Mammary epithelial cell (primary cell): ENCODE measurements at regions of chr12 and their contacts with region 1.

Region 1: GRCh38 chr12:33605751-33606150 is 166.1 kb upstream of the SYT10 start:
- DNase-seq: peak; percentile 30
- H3K4me3 ChIP-seq: no peak overlapping the region
- H3K27ac ChIP-seq: no peak overlapping the region
- H3K4me1 ChIP-seq: no peaks in the 10 kb centered on the region
- H3K27me3 ChIP-seq: no peaks in the 10 kb centered on the region
- CTCF ChIP-seq: peak; percentile 51 to 71

Region 2: GRCh38 chr12:33427072-33427471 is 178.7 kb before region 1 on chr12:
- CTCF ChIA-PET with region 1: no interaction called
- dilution Hi-C with region 1: no loop called
- in situ Hi-C with region 1: no loop called
- intact Hi-C with region 1: loop called (anchors 1 kb)
- DNase-seq: peak; percentile 45
- H3K4me3 ChIP-seq: no peak overlapping the region
- H3K27ac ChIP-seq: no peak overlapping the region
- H3K4me1 ChIP-seq: no peaks in the 10 kb centered on the region
- H3K27me3 ChIP-seq: peaks cover 2% of the 10 kb centered on the region
- CTCF ChIP-seq: peak; percentile 50 to 63

Region 3: DNA sequence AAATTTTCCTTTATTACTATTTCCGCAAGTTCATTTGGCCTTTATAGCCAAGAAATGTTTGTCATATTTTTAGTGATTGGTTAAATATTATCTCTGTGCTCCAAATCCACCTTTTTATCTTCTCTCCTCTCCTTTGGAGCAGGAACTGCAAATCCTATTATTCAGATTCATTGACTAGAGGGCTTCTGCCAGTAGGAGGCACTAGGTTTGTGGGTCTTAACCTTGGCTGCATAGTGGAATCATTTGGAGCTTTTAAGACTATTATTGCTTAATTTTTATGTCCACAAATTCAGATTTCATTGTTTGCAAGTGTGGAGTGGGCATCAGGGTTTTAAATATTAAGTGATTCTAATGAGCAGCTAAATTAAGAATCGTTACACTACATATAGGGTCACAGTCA is 90.9 kb before region 1 on chr12:
- CTCF ChIA-PET with region 1: no interaction called
- dilution Hi-C with region 1: no loop called
- in situ Hi-C with region 1: no loop called
- intact Hi-C with region 1: loop called (anchors 5 kb)
- DNase-seq: no peak
- H3K4me3 ChIP-seq: no peak overlapping the region
- H3K27ac ChIP-seq: no peak overlapping the region
- H3K4me1 ChIP-seq: no peaks in the 10 kb centered on the region
- H3K27me3 ChIP-seq: no peaks in the 10 kb centered on the region
- CTCF ChIP-seq: peak; percentile 31 to 52

Region 4: GRCh38 chr12:33587870-33588712 is 17.7 kb before region 1 on chr12:
- CTCF ChIA-PET with region 1: no interaction called
- dilution Hi-C with region 1: no loop called
- in situ Hi-C with region 1: no loop called
- intact Hi-C with region 1: no loop called
- DNase-seq: peak; percentile 93
- H3K4me3 ChIP-seq: no peak overlapping the region
- H3K27ac ChIP-seq: peak overlapping the region; percentile 78
- H3K4me1 ChIP-seq: peaks cover 26% of the 10 kb centered on the region
- H3K27me3 ChIP-seq: no peaks in the 10 kb centered on the region
- CTCF ChIP-seq: no peak